B cell (primary cell): ENCODE measurements at regions of chrX and their contacts with region 1.

Region 1: GRCh38 chrX:147948531-147948930 is 32.6 kb upstream of the FMR1NB start:
- DNase-seq: no peak
- ATAC-seq: no peak
- H3K4me3 ChIP-seq: no peak overlapping the region
- H3K4me3 Mint-ChIP-seq: no peak overlapping the region
- H3K27ac ChIP-seq: no peak overlapping the region
- H3K27ac Mint-ChIP-seq: no peak overlapping the region
- H3K4me1 ChIP-seq: no peaks in the 10 kb centered on the region
- H3K4me1 Mint-ChIP-seq: no peaks in the 10 kb centered on the region
- H3K27me3 ChIP-seq: no peaks in the 10 kb centered on the region
- H3K27me3 Mint-ChIP-seq: no peaks in the 10 kb centered on the region
- CTCF ChIP-seq: no peak

Region 2: DNA sequence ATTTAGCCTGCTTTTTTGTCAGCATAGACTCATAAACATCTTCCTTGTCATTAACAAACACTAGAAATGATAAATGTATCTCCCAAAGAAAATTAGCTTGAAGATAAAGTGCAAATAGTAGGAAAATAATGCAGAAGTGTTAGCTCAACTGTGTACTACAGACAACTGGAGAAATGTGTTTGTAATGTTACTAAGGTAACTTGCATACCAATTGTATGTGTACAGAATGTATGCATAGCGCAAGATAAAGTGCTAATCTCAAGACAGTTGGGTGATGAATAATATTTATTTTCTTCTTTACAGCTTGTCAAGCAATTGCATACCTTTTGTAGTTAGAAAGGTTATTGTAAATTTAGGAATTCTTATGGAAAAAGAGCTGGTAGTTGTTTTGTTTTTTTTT is 14.7 kb before region 1 on chrX:
- CTCF ChIA-PET with region 1: no interaction called
- POLR2A ChIA-PET with region 1: no interaction called
- intact Hi-C with region 1: loop called (anchors 2 kb)
- DNase-seq: no peak
- ATAC-seq: no peak
- H3K4me3 ChIP-seq: no peak overlapping the region
- H3K4me3 Mint-ChIP-seq: no peak overlapping the region
- H3K27ac ChIP-seq: no peak overlapping the region
- H3K27ac Mint-ChIP-seq: no peak overlapping the region
- H3K4me1 ChIP-seq: no peaks in the 10 kb centered on the region
- H3K4me1 Mint-ChIP-seq: no peaks in the 10 kb centered on the region
- H3K27me3 ChIP-seq: no peaks in the 10 kb centered on the region
- H3K27me3 Mint-ChIP-seq: no peaks in the 10 kb centered on the region
- CTCF ChIP-seq: no peak